ENCODE measurements at regions of chr7 and their contacts with region 1.

Region 1: GRCh38 chr7:94087664-94088352 is 83.7 kb upstream of the BET1 start:
- DNase-seq: peak in 1 of 2 experiments; percentile 54
- H3K4me3 ChIP-seq: peak overlapping the region in 1 of 4 experiments; percentile 6; a peak in 1 of 8 replicates
- H3K27ac ChIP-seq: no peak overlapping the region
- H3K4me1 ChIP-seq: no peaks in the 10 kb centered on the region
- H3K27me3 ChIP-seq: no peaks in the 10 kb centered on the region
- CTCF ChIP-seq: peak in 2 of 3 experiments; percentile 83 to 84; a peak in 3 of 4 replicates
- EP300 ChIP-seq: no peak
- POLR2A ChIP-seq: no peak
- RAD21 ChIP-seq: peak; percentile 78 to 81

Region 2: DNA sequence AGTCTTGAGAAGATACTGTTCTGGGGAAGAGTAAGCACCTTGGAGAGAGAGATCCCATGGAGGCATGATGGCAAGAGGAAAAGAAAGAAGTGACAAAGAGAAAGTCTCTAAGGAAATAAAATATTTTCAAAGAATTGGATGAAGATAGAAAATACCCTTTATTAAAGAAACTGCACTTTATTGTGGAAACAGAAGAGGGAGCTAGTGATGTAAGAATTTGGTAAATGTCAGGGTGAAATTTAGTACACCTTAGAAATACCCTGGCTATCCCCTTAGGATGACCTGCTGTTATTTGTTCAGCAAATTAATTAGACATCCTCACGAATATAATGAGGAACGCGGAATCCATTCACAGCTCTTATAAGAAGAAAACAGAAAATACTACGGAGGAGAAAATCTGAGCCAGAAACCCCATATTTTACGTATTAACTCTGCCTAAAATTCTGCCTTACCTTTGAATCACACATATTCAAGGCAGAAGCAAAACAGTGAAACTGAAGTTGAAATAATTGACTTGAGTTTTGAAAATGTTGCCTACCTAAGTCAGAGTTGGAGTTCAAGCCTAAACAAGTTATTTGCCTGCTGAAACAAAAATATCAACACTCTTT is 288.0 kb before region 1 on chr7:
- CTCF ChIA-PET with region 1: interaction called, 17 read pairs
- POLR2A ChIA-PET with region 1: no interaction called
- DNase-seq: no peak
- H3K4me3 ChIP-seq: no peak overlapping the region
- H3K27ac ChIP-seq: no peak overlapping the region
- H3K4me1 ChIP-seq: no peaks in the 10 kb centered on the region
- H3K27me3 ChIP-seq: no peaks in the 10 kb centered on the region
- CTCF ChIP-seq: peak in 2 of 3 experiments; percentile 25 to 48; a peak in 2 of 4 replicates
- EP300 ChIP-seq: no peak
- POLR2A ChIP-seq: no peak
- RAD21 ChIP-seq: peak; percentile 57 to 66

Region 3: GRCh38 chr7:93902777-93903423 is 184.9 kb before region 1 on chr7:
- CTCF ChIA-PET with region 1: interaction called, 46 read pairs
- POLR2A ChIA-PET with region 1: no interaction called
- DNase-seq: peak in 1 of 2 experiments; percentile 54
- H3K4me3 ChIP-seq: no peak overlapping the region
- H3K27ac ChIP-seq: no peak overlapping the region
- H3K4me1 ChIP-seq: peaks cover 0 to 2% (median 0%) of the 10 kb centered on the region in 4 experiments; a peak in 1 of 7 replicates
- H3K27me3 ChIP-seq: no peaks in the 10 kb centered on the region
- CTCF ChIP-seq: peak in 2 of 3 experiments; percentile 68 to 71; a peak in 3 of 4 replicates
- EP300 ChIP-seq: no peak
- POLR2A ChIP-seq: no peak
- RAD21 ChIP-seq: peak; percentile 78 to 87

Region 4: GRCh38 chr7:93921607-93922566 is 165.9 kb before region 1 on chr7 and contains the start of gene GNG11:
- CTCF ChIA-PET with region 1: interaction called, 21 read pairs
- POLR2A ChIA-PET with region 1: no interaction called
- DNase-seq: peak; percentile 10 to 75
- H3K4me3 ChIP-seq: peak within 1 kb of the TSS; percentile 61 to 72 (median 63)
- H3K27ac ChIP-seq: no peak within 1 kb of the TSS
- H3K4me1 ChIP-seq: peaks cover 0 to 7% (median 2%) of the 10 kb centered on the region in 4 experiments; a peak in 2 of 7 replicates
- H3K27me3 ChIP-seq: no peaks in the 10 kb centered on the region
- CTCF ChIP-seq: no peak
- EP300 ChIP-seq: no peak
- POLR2A ChIP-seq: peak in 1 of 2 experiments; percentile 33; a peak in 1 of 3 replicates
- RAD21 ChIP-seq: peak in 1 of 2 experiments; percentile 31; a peak in 1 of 4 replicates
- total RNA-seq, gene GNG11: 1.3 TPM in 2 replicates

Region 5: GRCh38 chr7:93935112-93935511 is 152.7 kb before region 1 on chr7:
- CTCF ChIA-PET with region 1: no interaction called
- POLR2A ChIA-PET with region 1: no interaction called
- DNase-seq: no peak
- H3K4me3 ChIP-seq: no peak overlapping the region
- H3K27ac ChIP-seq: no peak overlapping the region
- H3K4me1 ChIP-seq: no peaks in the 10 kb centered on the region
- H3K27me3 ChIP-seq: peaks cover 0 to 1% (median 0%) of the 10 kb centered on the region in 4 experiments; a peak in 1 of 7 replicates
- CTCF ChIP-seq: no peak
- EP300 ChIP-seq: no peak
- POLR2A ChIP-seq: no peak
- RAD21 ChIP-seq: no peak

Region 6: GRCh38 chr7:94069162-94069739 is 18.6 kb before region 1 on chr7:
- CTCF ChIA-PET with region 1: interaction called, 13 read pairs
- POLR2A ChIA-PET with region 1: no interaction called
- DNase-seq: no peak
- H3K4me3 ChIP-seq: no peak overlapping the region
- H3K27ac ChIP-seq: no peak overlapping the region
- H3K4me1 ChIP-seq: no peaks in the 10 kb centered on the region
- H3K27me3 ChIP-seq: no peaks in the 10 kb centered on the region
- CTCF ChIP-seq: no peak
- EP300 ChIP-seq: no peak
- POLR2A ChIP-seq: no peak
- RAD21 ChIP-seq: no peak

Region 7: DNA sequence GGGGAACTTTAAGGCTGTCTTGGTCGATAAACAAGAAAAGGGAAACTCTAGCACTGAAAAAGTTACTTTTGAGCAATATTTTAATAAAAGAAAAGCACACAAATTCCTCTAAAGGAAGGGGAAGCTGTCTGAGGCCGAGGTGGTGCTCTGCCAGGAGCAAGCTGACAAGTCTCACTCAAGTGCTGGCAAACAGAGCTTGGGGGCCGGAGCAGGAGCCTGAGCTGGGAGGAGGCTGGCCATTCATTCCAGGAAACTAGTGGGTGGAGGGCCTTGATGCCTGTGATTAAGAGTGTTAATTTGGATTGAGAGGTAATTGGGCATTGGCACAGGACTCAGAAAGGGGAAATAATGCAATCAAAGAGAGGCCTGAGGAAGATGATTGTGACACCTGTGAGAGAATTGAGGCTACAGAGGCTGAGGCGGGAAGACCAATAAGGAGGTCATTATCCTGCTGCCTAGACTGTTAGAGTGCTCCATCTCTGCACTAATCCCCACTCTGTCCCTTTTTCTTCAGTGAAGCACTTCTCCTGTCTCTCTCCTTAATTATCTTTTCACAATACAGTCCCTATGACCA is 151.9 kb after region 1 on chr7:
- CTCF ChIA-PET with region 1: no interaction called
- POLR2A ChIA-PET with region 1: no interaction called
- DNase-seq: no peak
- H3K4me3 ChIP-seq: no peak overlapping the region
- H3K27ac ChIP-seq: no peak overlapping the region
- H3K4me1 ChIP-seq: no peaks in the 10 kb centered on the region
- H3K27me3 ChIP-seq: peaks cover 21 to 51% (median 32%) of the 10 kb centered on the region in 4 experiments
- CTCF ChIP-seq: no peak
- EP300 ChIP-seq: no peak
- POLR2A ChIP-seq: no peak
- RAD21 ChIP-seq: no peak